ENCODE measurements at regions of chr11 and their contacts with region 1.

Region 1: DNA sequence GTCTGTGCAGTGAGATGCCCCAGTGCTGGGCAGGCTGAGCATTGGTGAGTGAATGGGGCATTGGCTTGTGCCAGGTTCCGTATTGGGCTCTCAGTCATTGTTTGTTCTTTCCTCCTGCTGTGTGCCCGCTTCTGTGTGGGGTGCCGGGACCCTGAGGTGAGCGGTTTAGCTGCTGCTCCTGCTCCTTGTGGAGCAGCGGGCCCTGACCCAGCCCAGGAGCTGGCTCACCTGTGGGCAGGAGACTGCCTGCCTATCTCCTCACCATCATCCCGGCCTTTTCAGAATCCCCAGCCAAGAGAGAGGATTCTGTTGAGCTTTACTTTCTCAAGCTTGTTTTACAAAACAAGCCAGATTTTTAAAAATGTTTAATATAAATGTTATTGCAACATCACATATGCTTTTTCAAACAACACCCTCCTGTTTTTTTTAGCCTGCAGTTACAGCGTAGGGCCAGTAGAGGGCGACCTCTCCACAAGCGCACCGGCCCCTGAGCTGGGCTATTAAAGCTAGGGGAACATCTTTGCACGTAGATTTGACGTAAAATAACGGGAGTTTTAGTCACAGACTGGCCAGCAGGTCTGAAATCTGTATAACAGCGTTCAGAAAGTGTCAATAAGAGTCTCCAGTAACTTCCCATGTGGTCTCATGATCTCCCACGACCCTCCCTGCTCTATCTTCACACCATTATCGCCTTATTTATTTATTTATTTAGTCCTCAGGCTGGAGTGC is 25.1 kb upstream of the RELT start:
- DNase-seq: no peak
- ATAC-seq: peak; percentile 89
- H3K4me3 ChIP-seq: no peak overlapping the region
- H3K27ac ChIP-seq: no peak overlapping the region
- H3K4me1 ChIP-seq: no peaks in the 10 kb centered on the region
- H3K27me3 ChIP-seq: no peaks in the 10 kb centered on the region
- CTCF ChIP-seq: peak; percentile 94 to 99 (median 97)
- EP300 ChIP-seq: no peak
- POLR2A ChIP-seq: no peak
- RAD21 ChIP-seq: peak; percentile 96

Region 2: DNA sequence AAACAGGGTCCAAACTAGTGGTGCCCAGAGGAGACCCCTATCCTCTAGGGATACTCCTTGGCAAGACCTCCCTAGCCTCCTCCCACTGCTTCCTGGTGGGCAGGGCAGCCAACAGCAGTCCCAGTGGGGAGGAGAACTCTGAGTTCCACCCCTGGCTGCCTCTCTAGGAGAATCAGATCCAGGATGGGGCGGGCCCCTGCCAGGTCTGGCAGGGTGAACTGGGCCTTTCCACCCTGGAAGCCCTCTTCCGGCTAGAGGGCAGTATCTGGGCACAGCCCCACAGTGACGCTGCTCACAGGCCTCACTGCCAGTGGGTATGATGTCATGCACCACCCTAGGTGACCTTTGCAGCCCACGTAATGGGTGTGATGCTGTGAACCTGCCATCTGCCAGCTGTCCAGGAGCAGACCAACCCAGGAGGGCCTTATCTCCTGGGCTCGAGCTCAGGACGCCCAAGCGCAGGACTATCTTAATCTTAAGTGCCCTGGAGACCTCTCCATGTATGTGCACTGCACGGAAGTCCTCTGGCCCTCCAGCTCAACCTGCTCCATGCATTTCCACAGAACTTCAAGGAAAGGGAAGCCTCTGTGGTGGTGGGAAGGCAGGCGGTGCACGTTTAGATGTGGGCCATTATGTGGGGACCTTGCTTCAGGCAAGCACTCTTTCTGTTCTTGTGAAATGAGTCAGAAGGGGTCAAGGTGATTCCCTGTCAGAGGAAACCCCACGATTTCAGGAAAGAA is 177.1 kb before region 1 on chr11:
- CTCF ChIA-PET with region 1: no interaction called
- POLR2A ChIA-PET with region 1: no interaction called
- RAD21 ChIA-PET with region 1: no interaction called
- SMC1A ChIA-PET with region 1: no interaction called
- in situ Hi-C with region 1: no loop called
- intact Hi-C with region 1: no loop called
- DNase-seq: no peak
- ATAC-seq: no peak
- H3K4me3 ChIP-seq: no peak overlapping the region
- H3K27ac ChIP-seq: peak overlapping the region; percentile 27
- H3K4me1 ChIP-seq: peaks cover 54% of the 10 kb centered on the region
- H3K27me3 ChIP-seq: no peaks in the 10 kb centered on the region
- CTCF ChIP-seq: no peak
- EP300 ChIP-seq: no peak
- POLR2A ChIP-seq: no peak
- RAD21 ChIP-seq: no peak

Region 3: GRCh38 chr11:73314117-73314961 is 36.7 kb before region 1 on chr11:
- CTCF ChIA-PET with region 1: interaction called, 13 read pairs
- POLR2A ChIA-PET with region 1: no interaction called
- RAD21 ChIA-PET with region 1: interaction called, 4 read pairs
- SMC1A ChIA-PET with region 1: interaction called, 6 read pairs
- in situ Hi-C with region 1: no loop called
- intact Hi-C with region 1: no loop called
- DNase-seq: no peak
- ATAC-seq: peak; percentile 73
- H3K4me3 ChIP-seq: peak overlapping the region; percentile 16
- H3K27ac ChIP-seq: peak overlapping the region; percentile 63
- H3K4me1 ChIP-seq: peaks cover 14% of the 10 kb centered on the region
- H3K27me3 ChIP-seq: no peaks in the 10 kb centered on the region
- CTCF ChIP-seq: no peak
- EP300 ChIP-seq: no peak
- POLR2A ChIP-seq: no peak
- RAD21 ChIP-seq: no peak

Region 4: DNA sequence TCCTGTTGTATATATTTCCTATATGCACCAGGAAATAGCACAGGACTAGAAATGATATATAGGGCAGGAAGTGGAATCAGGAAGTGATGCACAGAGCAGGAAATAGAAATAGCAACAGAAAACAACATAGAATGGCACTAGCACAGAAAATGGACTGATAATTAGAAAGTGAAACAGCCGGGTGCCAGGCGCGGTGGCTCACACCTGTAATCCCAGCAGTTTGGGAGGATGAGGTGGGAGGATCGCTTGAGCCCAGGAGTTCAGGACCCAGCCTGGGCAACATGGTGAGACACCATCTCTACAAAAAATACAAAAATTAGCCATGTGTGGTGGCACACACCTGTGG is 15.2 kb after region 1 on chr11:
- CTCF ChIA-PET with region 1: interaction called, 37 read pairs
- POLR2A ChIA-PET with region 1: no interaction called
- RAD21 ChIA-PET with region 1: interaction called, 7 read pairs
- SMC1A ChIA-PET with region 1: interaction called, 5 read pairs
- in situ Hi-C with region 1: no loop called
- intact Hi-C with region 1: no loop called
- DNase-seq: no peak
- ATAC-seq: peak; percentile 21; the same call in 2 of the 3 replicates
- H3K4me3 ChIP-seq: no peak overlapping the region
- H3K27ac ChIP-seq: no peak overlapping the region
- H3K4me1 ChIP-seq: peaks cover 11% of the 10 kb centered on the region
- H3K27me3 ChIP-seq: no peaks in the 10 kb centered on the region
- CTCF ChIP-seq: no peak
- EP300 ChIP-seq: no peak
- POLR2A ChIP-seq: no peak
- RAD21 ChIP-seq: no peak

Region 5: DNA sequence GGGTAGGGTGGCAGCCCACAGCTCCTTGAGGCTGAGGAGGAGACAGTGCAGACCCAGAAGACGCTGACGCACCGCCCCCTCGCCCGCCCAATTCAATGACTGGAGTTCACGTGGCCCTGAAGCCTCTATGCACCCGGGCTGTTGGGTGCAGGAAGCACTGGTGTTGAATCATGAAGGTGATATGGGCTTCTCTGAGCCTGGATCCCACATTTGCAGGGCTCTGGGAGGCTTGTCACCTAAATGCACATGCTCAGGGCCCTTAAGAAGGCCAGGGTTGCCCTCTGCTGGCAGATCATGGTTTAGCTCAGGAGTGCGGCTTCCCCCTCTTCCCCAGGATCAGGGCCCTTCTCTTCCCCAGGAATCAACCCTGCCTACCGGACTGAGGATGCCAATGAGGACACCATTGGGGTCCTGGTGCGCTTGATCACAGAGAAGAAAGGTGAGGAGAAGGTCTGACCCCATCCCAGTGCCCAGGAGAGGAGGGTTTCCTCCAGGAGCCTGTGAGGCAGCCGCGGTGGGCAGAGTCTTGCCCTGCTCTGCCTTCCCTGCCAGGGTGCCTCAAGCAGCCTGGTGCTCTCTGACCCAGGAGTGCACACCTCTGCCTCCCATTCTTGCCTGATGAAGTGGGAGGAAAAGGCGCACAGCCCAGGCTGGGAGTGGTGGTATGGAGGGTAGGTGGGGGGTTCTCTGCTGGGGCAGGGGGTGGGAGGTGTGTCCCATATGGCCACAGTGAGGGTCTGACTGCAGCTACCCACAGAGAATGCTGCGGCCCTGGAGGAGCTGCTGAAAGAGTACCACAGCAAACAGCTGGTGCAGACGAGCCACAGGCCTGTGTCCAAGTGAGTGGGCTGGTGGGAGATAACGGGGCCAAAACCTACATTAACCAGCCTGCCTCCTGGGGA is 42.7 kb after region 1 on chr11:
- CTCF ChIA-PET with region 1: interaction called, 400 read pairs
- POLR2A ChIA-PET with region 1: interaction called, 4 read pairs
- RAD21 ChIA-PET with region 1: interaction called, 71 read pairs
- SMC1A ChIA-PET with region 1: interaction called, 44 read pairs
- in situ Hi-C with region 1: no loop called
- intact Hi-C with region 1: loop called (anchors 1 kb)
- DNase-seq: no peak
- ATAC-seq: peak; percentile 84
- H3K4me3 ChIP-seq: no peak overlapping the region
- H3K27ac ChIP-seq: no peak overlapping the region
- H3K4me1 ChIP-seq: peaks cover 4% of the 10 kb centered on the region
- H3K27me3 ChIP-seq: no peaks in the 10 kb centered on the region
- CTCF ChIP-seq: peak; percentile 83 to 90 (median 88)
- EP300 ChIP-seq: no peak
- POLR2A ChIP-seq: no peak
- RAD21 ChIP-seq: peak; percentile 91

Region 6: GRCh38 chr11:73625696-73626318 is 274.7 kb after region 1 on chr11:
- CTCF ChIA-PET with region 1: interaction called, 20 read pairs
- POLR2A ChIA-PET with region 1: no interaction called
- RAD21 ChIA-PET with region 1: interaction called, 14 read pairs
- SMC1A ChIA-PET with region 1: interaction called, 18 read pairs
- in situ Hi-C with region 1: no loop called
- intact Hi-C with region 1: no loop called
- DNase-seq: peak; percentile 23
- ATAC-seq: peak; percentile 98
- H3K4me3 ChIP-seq: no peak overlapping the region
- H3K27ac ChIP-seq: no peak overlapping the region
- H3K4me1 ChIP-seq: no peaks in the 10 kb centered on the region
- H3K27me3 ChIP-seq: no peaks in the 10 kb centered on the region
- CTCF ChIP-seq: peak; percentile 83 to 91 (median 84)
- EP300 ChIP-seq: no peak
- POLR2A ChIP-seq: no peak
- RAD21 ChIP-seq: peak; percentile 82